Mammary epithelial cell (primary cell): ENCODE measurements at regions of chr3 and their contacts with region 1.

Region 1: DNA sequence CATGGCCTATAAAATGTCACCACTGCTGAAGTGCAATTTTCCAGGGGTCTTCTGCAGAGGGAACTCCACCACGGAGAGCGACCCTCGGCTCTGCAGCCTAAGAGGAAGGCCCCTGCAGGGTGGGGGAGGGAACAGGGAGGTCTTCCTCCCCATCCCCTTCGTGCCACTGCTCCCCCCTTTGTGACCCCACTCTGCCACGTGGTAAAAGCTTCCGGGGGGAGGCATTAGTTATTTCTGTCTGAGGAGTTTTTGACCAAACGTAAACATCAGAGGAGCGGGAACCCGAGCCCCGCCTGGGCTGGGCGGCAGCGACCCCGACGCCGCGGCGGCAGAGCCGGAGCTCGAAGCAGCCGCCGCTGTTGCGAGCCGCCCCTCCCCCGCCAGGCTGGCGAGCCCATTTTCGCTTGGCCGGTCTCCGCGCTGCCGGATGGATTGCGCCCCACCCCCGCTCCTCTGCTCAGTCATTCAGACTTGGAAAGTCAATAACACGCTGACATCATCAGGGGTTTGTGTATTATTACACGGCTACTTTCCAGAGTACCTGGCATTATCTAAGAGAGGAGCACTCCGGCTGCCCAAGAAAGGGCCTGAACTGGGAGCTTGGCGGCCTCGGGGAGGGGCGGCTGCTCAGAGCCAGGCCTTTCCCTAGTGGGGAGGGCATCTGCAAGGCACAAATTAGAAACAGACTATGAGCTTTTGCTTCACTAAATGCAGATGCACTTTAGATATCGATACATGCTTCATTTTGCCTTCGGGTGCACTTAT is 162.5 kb upstream of the TBL1XR1 start:
- DNase-seq: peak; percentile 97
- H3K4me3 ChIP-seq: peak overlapping the region in 2 of 3 experiments; percentile 26 to 35
- H3K27ac ChIP-seq: peak overlapping the region; percentile 57
- H3K4me1 ChIP-seq: peaks cover 44% of the 10 kb centered on the region
- H3K27me3 ChIP-seq: no peaks in the 10 kb centered on the region
- CTCF ChIP-seq: no peak

Region 2: GRCh38 chr3:177050501-177051237 is 309.1 kb before region 1 on chr3:
- CTCF ChIA-PET with region 1: interaction called, 4 read pairs
- dilution Hi-C with region 1: no loop called
- in situ Hi-C with region 1: loop called in 1 of 2 experiments (anchors 10 kb)
- intact Hi-C with region 1: loop called (anchors 1 kb)
- DNase-seq: peak; percentile 24
- H3K4me3 ChIP-seq: no peak overlapping the region
- H3K27ac ChIP-seq: peak overlapping the region; percentile 22
- H3K4me1 ChIP-seq: peaks cover 8% of the 10 kb centered on the region
- H3K27me3 ChIP-seq: no peaks in the 10 kb centered on the region
- CTCF ChIP-seq: peak; percentile 40 to 54

Region 3: DNA sequence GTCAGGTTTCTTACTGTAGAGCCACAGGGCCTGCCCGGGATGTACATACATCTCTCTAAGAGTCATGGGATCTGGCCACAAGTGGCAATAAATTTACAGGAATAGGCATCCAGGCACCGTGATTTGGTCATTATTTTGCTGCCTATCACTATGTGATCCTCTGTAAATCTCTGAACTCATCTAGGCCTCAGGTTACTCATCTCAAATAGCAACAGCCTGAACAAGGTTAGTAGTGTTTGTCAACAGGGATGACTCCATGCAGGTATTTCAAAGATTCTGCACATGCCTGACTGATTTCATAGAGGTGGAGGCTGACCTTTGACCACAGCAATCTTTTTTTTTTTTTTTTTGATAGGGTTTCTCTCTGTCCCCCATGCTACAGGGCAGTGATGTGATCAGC is 73.7 kb before region 1 on chr3:
- CTCF ChIA-PET with region 1: no interaction called
- dilution Hi-C with region 1: no loop called
- in situ Hi-C with region 1: no loop called
- intact Hi-C with region 1: loop called (anchors 1 kb)
- DNase-seq: peak; percentile 92
- H3K4me3 ChIP-seq: no peak overlapping the region
- H3K27ac ChIP-seq: peak overlapping the region; percentile 81
- H3K4me1 ChIP-seq: peaks cover 12% of the 10 kb centered on the region
- H3K27me3 ChIP-seq: no peaks in the 10 kb centered on the region
- CTCF ChIP-seq: no peak

Region 4: GRCh38 chr3:177345049-177345972 is 14.5 kb before region 1 on chr3:
- CTCF ChIA-PET with region 1: no interaction called
- dilution Hi-C with region 1: no loop called
- in situ Hi-C with region 1: no loop called
- intact Hi-C with region 1: loop called (anchors 1 kb)
- DNase-seq: peak; percentile 92
- H3K4me3 ChIP-seq: no peak overlapping the region
- H3K27ac ChIP-seq: peak overlapping the region; percentile 95
- H3K4me1 ChIP-seq: peaks cover 22% of the 10 kb centered on the region
- H3K27me3 ChIP-seq: no peaks in the 10 kb centered on the region
- CTCF ChIP-seq: no peak

Region 5: DNA sequence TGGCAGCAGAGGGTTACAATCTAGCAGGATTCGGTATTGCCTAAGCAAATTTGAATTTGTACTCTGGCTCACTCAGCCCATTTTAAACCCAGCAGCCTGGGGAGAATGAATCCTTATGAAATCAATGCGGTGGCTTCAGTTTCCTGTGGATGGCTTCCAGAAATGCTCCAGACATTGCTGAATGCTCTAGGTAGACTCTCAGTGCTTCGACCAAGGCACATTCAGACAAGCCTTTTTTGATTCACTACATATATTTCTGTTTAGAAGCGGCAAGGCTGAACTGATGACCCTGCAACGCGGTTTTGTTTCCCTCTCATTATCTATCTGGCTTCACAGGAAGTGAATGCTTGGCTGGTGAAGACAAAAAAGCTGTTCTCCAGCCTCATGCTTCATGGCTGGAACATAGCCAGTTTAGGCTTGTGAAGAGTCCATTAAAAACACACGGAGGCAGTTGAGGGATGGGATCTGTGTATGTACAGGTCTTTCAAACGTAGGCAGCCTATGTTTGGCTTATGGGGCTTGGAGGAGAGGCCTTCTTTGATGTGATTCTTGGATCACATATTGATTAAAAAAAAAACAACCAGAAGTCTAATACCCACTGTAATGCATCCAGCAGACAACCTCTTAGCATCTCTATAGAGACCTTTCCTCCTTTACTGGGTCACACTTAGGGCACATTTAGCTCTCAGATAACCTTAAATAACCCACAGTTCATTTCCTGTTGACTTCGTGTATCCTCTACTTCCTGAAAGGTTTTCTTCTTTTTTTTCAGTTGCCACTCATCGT is 237.7 kb after region 1 on chr3:
- CTCF ChIA-PET with region 1: no interaction called
- dilution Hi-C with region 1: no loop called
- in situ Hi-C with region 1: no loop called
- intact Hi-C with region 1: loop called (anchors 10 kb)
- DNase-seq: peak; percentile 91
- H3K4me3 ChIP-seq: no peak overlapping the region
- H3K27ac ChIP-seq: peak overlapping the region; percentile 89
- H3K4me1 ChIP-seq: peaks cover 77% of the 10 kb centered on the region
- H3K27me3 ChIP-seq: no peaks in the 10 kb centered on the region
- CTCF ChIP-seq: no peak

Region 6: DNA sequence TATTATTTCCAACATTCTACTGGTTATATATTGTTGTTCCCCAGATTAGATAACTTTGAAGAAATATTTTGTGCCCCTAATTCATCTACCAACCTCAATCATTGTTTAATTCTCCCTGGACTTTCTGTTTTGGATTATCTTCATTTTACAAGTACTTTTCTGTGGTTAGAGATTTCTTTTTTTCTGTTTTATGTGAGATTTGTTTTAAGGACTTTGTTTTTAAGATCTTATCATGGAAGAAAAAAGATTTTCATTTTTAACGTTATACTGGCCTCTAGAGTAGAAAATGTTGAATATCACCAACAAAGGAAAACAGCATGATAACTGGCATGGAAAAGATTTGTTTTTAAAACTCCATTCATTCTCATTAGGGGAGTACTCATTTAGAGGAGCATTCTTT is 965.6 kb after region 1 on chr3:
- CTCF ChIA-PET with region 1: interaction called, 3 read pairs
- dilution Hi-C with region 1: no loop called
- in situ Hi-C with region 1: no loop called
- intact Hi-C with region 1: loop called (anchors 10 kb)
- DNase-seq: no peak
- H3K4me3 ChIP-seq: no peak overlapping the region
- H3K27ac ChIP-seq: no peak overlapping the region
- H3K4me1 ChIP-seq: no peaks in the 10 kb centered on the region
- H3K27me3 ChIP-seq: no peaks in the 10 kb centered on the region
- CTCF ChIP-seq: peak; percentile 49 to 56